WTC11 (cell line): ENCODE measurements at regions of chr19 and their contacts with region 1.

Region 1: DNA sequence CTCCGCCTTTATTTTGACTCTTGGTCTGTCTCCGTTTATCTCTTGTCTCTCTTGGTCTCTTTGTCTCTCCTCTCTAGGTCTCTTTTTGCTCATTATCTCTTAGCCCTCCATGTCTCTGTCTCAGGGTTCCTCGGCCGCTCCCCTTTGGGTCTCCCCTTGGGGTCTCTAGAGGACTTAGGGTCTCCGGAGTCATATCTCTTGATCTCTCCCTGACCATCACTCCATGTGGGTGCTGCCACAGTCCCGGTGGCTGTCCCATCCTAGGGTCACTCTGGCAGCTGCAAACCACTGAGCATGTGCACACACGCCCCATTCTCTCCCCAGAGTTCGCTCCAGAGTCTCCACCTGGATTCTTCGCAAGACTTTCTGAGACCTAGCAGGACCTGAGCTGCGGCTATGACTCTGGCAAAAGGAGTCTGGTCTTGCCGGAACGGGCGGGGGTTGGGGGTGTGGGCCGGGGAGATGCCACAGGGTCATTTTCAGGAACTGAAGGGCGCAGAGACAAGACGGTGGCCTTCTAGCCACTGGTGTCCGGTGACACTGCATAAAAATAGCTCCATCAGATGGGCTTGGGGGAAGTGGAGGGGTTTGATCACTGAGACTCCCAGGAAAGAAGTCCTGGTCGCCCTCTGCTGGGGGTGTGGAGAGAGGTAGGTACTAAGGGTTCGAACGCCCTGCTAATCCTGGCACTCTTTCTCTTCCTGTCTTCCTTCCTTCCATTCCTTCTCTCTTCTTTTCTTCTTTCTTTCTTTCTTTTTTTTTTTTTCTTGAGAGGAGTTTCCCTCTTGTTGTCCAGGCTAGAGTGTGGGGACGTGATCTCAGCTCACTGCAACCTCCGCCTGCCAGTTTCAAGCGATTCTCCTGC is 1.2 kb upstream of the KCNA7 start:
- DNase-seq: peak; percentile 68
- ATAC-seq: peak; percentile 23; the same call in 1 of the 2 replicates
- H3K4me3 Mint-ChIP-seq: peak overlapping the region; percentile 68
- H3K27ac Mint-ChIP-seq: no peak overlapping the region
- H3K4me1 Mint-ChIP-seq: peaks cover 8% of the 10 kb centered on the region; the same call in 1 of the 2 replicates
- H3K27me3 Mint-ChIP-seq: peaks cover 78% of the 10 kb centered on the region
- CTCF ChIP-seq: no peak; the same call in 1 of the 2 replicates

Region 2: GRCh38 chr19:49017666-49018351 is 55.9 kb before region 1 on chr19:
- CTCF ChIA-PET with region 1: interaction called, 21 read pairs
- POLR2A ChIA-PET with region 1: no interaction called
- DNase-seq: peak; percentile 66
- ATAC-seq: peak; percentile 71
- H3K4me3 Mint-ChIP-seq: peak overlapping the region; percentile 73
- H3K27ac Mint-ChIP-seq: no peak overlapping the region
- H3K4me1 Mint-ChIP-seq: peaks cover 23% of the 10 kb centered on the region
- H3K27me3 Mint-ChIP-seq: peaks cover 45% of the 10 kb centered on the region
- CTCF ChIP-seq: no peak

Region 3: GRCh38 chr19:49042177-49042576 is 31.6 kb before region 1 on chr19:
- CTCF ChIA-PET with region 1: no interaction called
- POLR2A ChIA-PET with region 1: no interaction called
- DNase-seq: no peak
- ATAC-seq: no peak
- H3K4me3 Mint-ChIP-seq: no peak overlapping the region
- H3K27ac Mint-ChIP-seq: no peak overlapping the region
- H3K4me1 Mint-ChIP-seq: no peaks in the 10 kb centered on the region
- H3K27me3 Mint-ChIP-seq: peaks cover 10% of the 10 kb centered on the region
- CTCF ChIP-seq: no peak

Region 4: DNA sequence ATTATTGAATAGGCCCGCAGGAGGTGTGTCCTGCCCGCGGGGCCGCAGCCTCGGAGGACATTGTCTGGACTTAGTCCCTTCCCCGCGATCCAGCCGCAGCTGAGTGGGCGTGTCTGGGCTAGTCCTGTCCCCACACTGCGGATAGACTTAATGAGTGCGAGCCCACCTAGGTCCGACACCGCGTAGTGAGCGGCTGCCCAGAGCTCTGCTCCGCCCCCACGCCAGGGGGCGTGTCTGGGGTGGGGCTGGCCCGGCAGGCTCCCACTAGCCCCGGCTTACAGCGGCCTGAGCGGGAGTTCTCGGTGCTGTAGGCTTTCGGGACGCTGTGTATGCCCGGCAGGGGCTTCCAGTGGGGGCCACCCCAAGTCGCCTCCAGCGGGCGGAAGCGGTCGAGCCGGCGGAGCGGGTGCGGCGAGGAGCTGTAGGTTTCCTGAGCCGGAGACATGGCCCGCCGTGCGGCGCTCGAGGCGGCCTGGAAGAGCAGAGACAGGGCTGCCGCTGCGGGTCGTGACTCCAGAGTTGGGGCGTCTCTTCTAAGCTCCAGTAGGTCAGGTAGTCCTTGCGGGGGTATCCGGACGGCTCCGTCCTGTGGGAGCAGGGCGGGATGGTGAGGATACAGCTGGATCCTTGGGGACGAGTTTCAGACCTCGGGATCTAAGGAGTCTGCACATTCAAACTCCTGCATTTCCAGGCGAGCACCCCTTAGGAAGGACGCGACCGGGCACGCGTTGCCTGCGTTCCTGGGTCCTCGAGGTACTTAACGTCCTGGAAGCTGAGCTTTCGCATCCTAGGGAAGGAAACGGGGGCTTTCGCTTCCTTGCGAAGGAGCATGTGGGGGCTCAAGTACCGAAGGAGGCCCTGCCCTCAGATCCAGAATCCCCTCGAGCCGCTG is 17.5 kb before region 1 on chr19:
- CTCF ChIA-PET with region 1: interaction called, 33 read pairs
- POLR2A ChIA-PET with region 1: interaction called, 5 read pairs
- DNase-seq: peak; percentile 76
- ATAC-seq: peak; percentile 82
- H3K4me3 Mint-ChIP-seq: peak overlapping the region; percentile 71
- H3K27ac Mint-ChIP-seq: no peak overlapping the region
- H3K4me1 Mint-ChIP-seq: peaks cover 14% of the 10 kb centered on the region
- H3K27me3 Mint-ChIP-seq: peaks cover 75% of the 10 kb centered on the region
- CTCF ChIP-seq: peak; percentile 19; the same call in 1 of the 2 replicates

Region 5: GRCh38 chr19:49106648-49107135 is 32.9 kb after region 1 on chr19:
- CTCF ChIA-PET with region 1: no interaction called
- POLR2A ChIA-PET with region 1: no interaction called
- DNase-seq: peak; percentile 83
- ATAC-seq: peak; percentile 80
- H3K4me3 Mint-ChIP-seq: peak overlapping the region; percentile 7; the same call in 1 of the 2 replicates
- H3K27ac Mint-ChIP-seq: peak overlapping the region; percentile 95
- H3K4me1 Mint-ChIP-seq: peaks cover 13% of the 10 kb centered on the region
- H3K27me3 Mint-ChIP-seq: no peaks in the 10 kb centered on the region
- CTCF ChIP-seq: peak; percentile 78

Region 6: GRCh38 chr19:49118565-49119410 is 45.0 kb after region 1 on chr19 and contains the start of gene C19orf73:
- CTCF ChIA-PET with region 1: interaction called, 11 read pairs
- POLR2A ChIA-PET with region 1: no interaction called
- DNase-seq: peak; percentile 94
- ATAC-seq: peak; percentile 81
- H3K4me3 Mint-ChIP-seq: peak within 1 kb of the TSS; percentile 75
- H3K27ac Mint-ChIP-seq: peak within 1 kb of the TSS; percentile 61
- H3K4me1 Mint-ChIP-seq: peaks cover 14% of the 10 kb centered on the region
- H3K27me3 Mint-ChIP-seq: peaks cover 64% of the 10 kb centered on the region
- CTCF ChIP-seq: no peak
- total RNA-seq, gene C19orf73: 3.1 to 3.4 TPM (median 3.2 TPM) in 3 replicates

Region 7: GRCh38 chr19:49127674-49128544 is 54.2 kb after region 1 on chr19:
- CTCF ChIA-PET with region 1: interaction called, 16 read pairs
- POLR2A ChIA-PET with region 1: no interaction called
- DNase-seq: peak; percentile 98
- ATAC-seq: peak; percentile 90
- H3K4me3 Mint-ChIP-seq: peak overlapping the region; percentile 89
- H3K27ac Mint-ChIP-seq: peak overlapping the region; percentile 97
- H3K4me1 Mint-ChIP-seq: peaks cover 25% of the 10 kb centered on the region
- H3K27me3 Mint-ChIP-seq: peaks cover 66% of the 10 kb centered on the region
- CTCF ChIP-seq: no peak